Activated CD8-positive, alpha-beta T cell treated with anti-CD3 and anti-CD28 coated beads for 36 hours (primary cell): ENCODE measurements at regions of chr11 and their contacts with region 1.

Region 1: GRCh38 chr11:65314501-65315203 is at the start of gene CDC42EP2:
- DNase-seq: peak; percentile 73
- ATAC-seq: peak; percentile 91
- H3K4me3 Mint-ChIP-seq: peak within 1 kb of the TSS; percentile 74
- H3K27ac Mint-ChIP-seq: no peak within 1 kb of the TSS
- H3K4me1 Mint-ChIP-seq: peaks cover 4% of the 10 kb centered on the region
- H3K27me3 Mint-ChIP-seq: peaks cover 9% of the 10 kb centered on the region
- CTCF ChIP-seq: no peak
- total RNA-seq, gene CDC42EP2: 1.2 TPM in 1 of 2 experiments, not detected in the other

Region 2: GRCh38 chr11:65111744-65112414 is 202.8 kb before region 1 on chr11 and contains the start of gene TM7SF2:
- CTCF ChIA-PET with region 1: interaction called, 18 read pairs
- POLR2A ChIA-PET with region 1: no interaction called
- intact Hi-C with region 1: no loop called
- DNase-seq: peak; percentile 98
- ATAC-seq: peak; percentile 77
- H3K4me3 Mint-ChIP-seq: peak within 1 kb of the TSS; percentile 86
- H3K27ac Mint-ChIP-seq: peak within 1 kb of the TSS; percentile 84
- H3K4me1 Mint-ChIP-seq: peaks cover 43% of the 10 kb centered on the region
- H3K27me3 Mint-ChIP-seq: no peaks in the 10 kb centered on the region
- CTCF ChIP-seq: no peak
- total RNA-seq, gene TM7SF2: 12.4 to 17.5 TPM

Region 3: DNA sequence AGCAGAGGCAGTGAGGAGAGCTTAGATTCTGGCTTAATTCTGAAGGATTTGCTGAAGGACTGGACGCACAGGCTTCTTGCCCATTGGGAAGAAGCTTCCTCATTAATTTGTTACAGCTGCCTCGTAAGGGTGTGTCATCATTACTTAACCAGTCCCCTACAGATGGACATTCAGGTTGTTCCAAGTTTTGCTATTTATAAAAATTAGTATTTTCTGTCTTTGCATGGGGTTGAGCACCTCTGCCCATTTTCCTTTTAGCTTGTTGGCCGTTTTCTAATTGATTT is 94.8 kb before region 1 on chr11:
- CTCF ChIA-PET with region 1: interaction called, 55 read pairs
- POLR2A ChIA-PET with region 1: interaction called, 3 read pairs
- intact Hi-C with region 1: loop called (anchors 10 kb)
- DNase-seq: no peak
- ATAC-seq: no peak
- H3K4me3 Mint-ChIP-seq: no peak overlapping the region
- H3K27ac Mint-ChIP-seq: no peak overlapping the region
- H3K4me1 Mint-ChIP-seq: peaks cover 14% of the 10 kb centered on the region
- H3K27me3 Mint-ChIP-seq: peaks cover 3% of the 10 kb centered on the region
- CTCF ChIP-seq: no peak

Region 4: GRCh38 chr11:65251476-65251875 is 63.2 kb before region 1 on chr11:
- CTCF ChIA-PET with region 1: interaction called, 34 read pairs
- POLR2A ChIA-PET with region 1: no interaction called
- intact Hi-C with region 1: no loop called
- DNase-seq: no peak
- ATAC-seq: no peak
- H3K4me3 Mint-ChIP-seq: no peak overlapping the region
- H3K27ac Mint-ChIP-seq: no peak overlapping the region
- H3K4me1 Mint-ChIP-seq: no peaks in the 10 kb centered on the region
- H3K27me3 Mint-ChIP-seq: peaks cover 7% of the 10 kb centered on the region
- CTCF ChIP-seq: no peak

Region 5: GRCh38 chr11:65290448-65291165 is 24.0 kb before region 1 on chr11:
- CTCF ChIA-PET with region 1: interaction called, 65 read pairs
- POLR2A ChIA-PET with region 1: interaction called, 8 read pairs
- intact Hi-C with region 1: no loop called
- DNase-seq: no peak
- ATAC-seq: no peak
- H3K4me3 Mint-ChIP-seq: no peak overlapping the region
- H3K27ac Mint-ChIP-seq: no peak overlapping the region
- H3K4me1 Mint-ChIP-seq: no peaks in the 10 kb centered on the region
- H3K27me3 Mint-ChIP-seq: no peaks in the 10 kb centered on the region
- CTCF ChIP-seq: no peak

Region 6: GRCh38 chr11:65354265-65355012 is 39.8 kb after region 1 on chr11 and contains the start of gene TIGD3:
- CTCF ChIA-PET with region 1: interaction called, 12 read pairs
- POLR2A ChIA-PET with region 1: no interaction called
- intact Hi-C with region 1: no loop called
- DNase-seq: peak; percentile 99
- ATAC-seq: peak; percentile 99
- H3K4me3 Mint-ChIP-seq: peak within 1 kb of the TSS; percentile 82
- H3K27ac Mint-ChIP-seq: peak within 1 kb of the TSS; percentile 63
- H3K4me1 Mint-ChIP-seq: peaks cover 13% of the 10 kb centered on the region
- H3K27me3 Mint-ChIP-seq: no peaks in the 10 kb centered on the region
- CTCF ChIP-seq: no peak
- total RNA-seq, gene TIGD3: 0.65 to 1.4 TPM

Region 7: GRCh38 chr11:65366340-65366773 is 51.7 kb after region 1 on chr11:
- CTCF ChIA-PET with region 1: no interaction called
- POLR2A ChIA-PET with region 1: no interaction called
- intact Hi-C with region 1: no loop called
- DNase-seq: peak; percentile 38
- ATAC-seq: peak; percentile 94
- H3K4me3 Mint-ChIP-seq: no peak overlapping the region
- H3K27ac Mint-ChIP-seq: no peak overlapping the region
- H3K4me1 Mint-ChIP-seq: peaks cover 3% of the 10 kb centered on the region
- H3K27me3 Mint-ChIP-seq: no peaks in the 10 kb centered on the region
- CTCF ChIP-seq: peak; percentile 92